ENCODE measurements at regions of chr19 and their contacts with region 1.

Region 1: GRCh38 chr19:18203863-18204393 is at the start of gene RAB3A:
- DNase-seq: peak; percentile 99
- CTCF ChIP-seq: no peak

Region 2: DNA sequence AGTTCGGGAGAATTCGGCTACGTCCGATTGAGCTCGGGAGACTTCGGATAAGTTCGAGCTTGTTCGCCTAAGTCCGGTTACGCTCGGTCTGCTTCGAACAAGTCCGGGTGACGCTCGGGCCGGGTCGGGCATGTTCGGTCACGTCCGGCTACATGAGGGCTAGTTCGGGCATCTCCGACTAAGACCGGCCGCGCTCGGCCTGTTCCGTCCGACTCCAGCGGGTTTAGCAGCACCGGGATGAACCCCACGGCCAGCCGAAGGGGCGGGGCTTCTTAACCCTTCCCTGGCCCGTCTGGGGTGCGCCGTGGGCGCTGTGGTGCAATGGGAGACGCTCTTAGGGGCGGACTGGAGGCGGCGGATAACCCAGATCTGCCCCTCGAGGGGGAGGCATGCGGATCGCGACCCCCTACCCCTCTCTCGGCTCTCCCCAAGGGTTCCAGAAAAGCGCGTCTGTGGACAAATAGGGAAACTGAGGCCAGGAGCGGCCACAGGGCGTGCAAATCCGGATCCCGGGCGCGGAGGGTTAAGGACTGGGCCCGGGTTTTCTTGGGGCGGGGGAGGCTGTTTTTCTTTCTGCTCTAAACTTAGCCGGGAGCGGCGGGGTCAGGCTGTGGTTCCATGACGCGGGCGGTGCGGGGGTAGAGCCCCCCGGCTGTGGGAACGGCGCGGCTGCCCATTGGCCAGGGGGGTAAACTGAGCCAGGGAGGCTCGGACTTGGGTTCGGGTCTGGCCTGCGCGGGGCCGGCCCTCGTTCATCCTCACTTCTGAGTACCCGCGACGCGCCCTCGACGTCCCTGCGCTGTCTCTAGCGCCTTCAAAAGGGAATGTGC is 20.8 kb after region 1 on chr19:
- CTCF ChIA-PET with region 1: interaction called, 57 read pairs
- POLR2A ChIA-PET with region 1: interaction called, 3 read pairs
- DNase-seq: peak; percentile 97
- CTCF ChIP-seq: no peak

Region 3: GRCh38 chr19:18233224-18233825 is 29.4 kb after region 1 on chr19:
- CTCF ChIA-PET with region 1: interaction called, 10 read pairs
- POLR2A ChIA-PET with region 1: no interaction called
- DNase-seq: peak; percentile 78
- CTCF ChIP-seq: no peak

Measured in GM10248 (cell line).